Ascending aorta (tissue), 2 donors: ENCODE measurements at regions of chr12 and their contacts with region 1.

Region 1: DNA sequence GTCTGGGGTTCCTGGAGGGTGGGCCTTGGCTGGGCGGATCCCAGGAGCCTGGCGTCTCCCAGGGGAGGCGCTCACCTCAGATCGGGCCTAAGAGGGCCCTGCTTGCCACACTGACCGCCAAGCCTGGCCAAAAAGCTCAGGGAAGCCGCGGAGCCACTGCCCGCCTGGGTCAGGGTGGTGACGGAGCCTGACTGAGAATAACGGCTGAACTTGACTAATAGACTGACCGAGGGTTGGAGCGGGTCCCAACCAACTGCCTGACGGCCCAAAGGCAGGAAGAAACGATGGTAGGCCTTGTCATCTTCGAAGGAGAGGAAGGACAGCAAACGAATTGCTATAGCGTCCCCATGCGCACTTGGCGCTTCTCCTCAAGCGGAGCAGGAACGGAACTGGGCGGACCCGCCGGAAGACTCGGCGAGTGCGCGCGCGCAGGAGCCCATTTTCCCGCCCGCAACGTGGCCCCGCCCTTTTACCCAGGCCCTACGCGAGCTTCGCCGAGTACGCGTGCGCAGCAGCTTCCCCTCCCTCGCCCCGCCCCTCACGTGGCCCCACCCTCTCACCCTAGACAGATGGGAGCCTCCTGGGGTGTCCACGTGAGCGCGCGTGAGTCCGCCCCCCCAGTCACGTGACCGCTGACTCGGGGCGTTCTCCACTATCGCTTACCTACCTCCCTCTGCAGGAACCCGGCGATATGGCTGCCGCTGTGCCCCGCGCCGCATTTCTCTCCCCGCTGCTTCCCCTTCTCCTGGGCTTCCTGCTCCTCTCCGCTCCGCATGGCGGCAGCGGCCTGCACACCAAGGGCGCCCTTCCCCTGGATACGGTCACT is at the starts of genes ERP29 and TMEM116:
- DNase-seq: peak; percentile 97 to 100
- H3K4me3 ChIP-seq: peak within 1 kb of the TSS; percentile 85
- H3K27ac ChIP-seq: peak within 1 kb of the TSS; percentile 97 to 99
- H3K4me1 ChIP-seq: peaks cover 3 to 20% of the 10 kb centered on the region in 2 donors
- H3K27me3 ChIP-seq: no peaks in the 10 kb centered on the region
- CTCF ChIP-seq: peak; percentile 77 to 85 (median 82)
- total RNA-seq, gene ERP29: 21.6 TPM
- total RNA-seq, gene TMEM116: 2.2 TPM

Region 2: DNA sequence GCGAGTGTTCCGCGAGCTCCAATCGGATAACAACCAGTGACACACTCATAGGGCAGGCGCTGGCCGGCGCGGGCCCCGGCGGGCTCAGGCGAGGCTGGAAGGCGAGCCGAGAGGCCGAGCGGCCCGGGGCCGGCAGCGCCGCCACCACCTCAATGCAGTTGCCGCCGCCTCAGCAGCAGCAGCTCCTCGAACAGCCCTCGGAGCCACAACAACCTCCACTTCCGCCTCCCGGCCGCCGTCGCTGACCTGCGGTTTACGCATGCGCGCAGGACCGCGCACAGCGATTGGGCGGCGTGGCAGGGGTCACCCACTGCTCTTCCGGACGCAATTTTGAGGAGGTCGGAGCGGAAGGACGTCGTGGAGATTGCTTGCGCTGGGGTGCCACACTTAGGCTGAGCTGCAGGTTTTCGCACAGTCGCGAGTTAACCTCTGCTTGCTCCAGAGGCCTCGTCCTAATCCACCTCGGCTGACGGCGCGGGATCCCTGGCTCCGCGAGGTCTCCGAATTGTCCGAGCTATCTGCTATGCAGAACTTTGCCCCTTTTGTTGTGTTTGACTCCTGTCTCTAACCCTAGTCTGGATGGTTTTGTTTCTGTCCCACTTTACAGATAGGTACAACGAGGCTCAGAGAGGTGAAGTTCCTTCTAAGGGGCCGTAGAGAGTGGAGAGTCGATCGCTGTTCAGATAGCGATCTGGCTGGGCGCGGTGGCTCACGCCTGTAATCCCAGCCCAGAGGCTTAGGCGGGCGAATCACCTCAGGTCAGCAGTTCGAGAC is 327.1 kb before region 1 on chr12 and contains the starts of genes ACAD10 and BRAP:
- intact Hi-C with region 1: loop called (anchors 5 kb)
- DNase-seq: peak; percentile 71 to 96
- H3K4me3 ChIP-seq: peak within 1 kb of the TSS; percentile 78 to 88
- H3K27ac ChIP-seq: peak within 1 kb of the TSS; percentile 82 to 88
- H3K4me1 ChIP-seq: peaks cover 10 to 18% of the 10 kb centered on the region in 2 donors
- H3K27me3 ChIP-seq: no peaks in the 10 kb centered on the region
- CTCF ChIP-seq: no peak
- total RNA-seq, gene ACAD10: 32.0 TPM
- total RNA-seq, gene BRAP: 6.2 TPM

Region 3: DNA sequence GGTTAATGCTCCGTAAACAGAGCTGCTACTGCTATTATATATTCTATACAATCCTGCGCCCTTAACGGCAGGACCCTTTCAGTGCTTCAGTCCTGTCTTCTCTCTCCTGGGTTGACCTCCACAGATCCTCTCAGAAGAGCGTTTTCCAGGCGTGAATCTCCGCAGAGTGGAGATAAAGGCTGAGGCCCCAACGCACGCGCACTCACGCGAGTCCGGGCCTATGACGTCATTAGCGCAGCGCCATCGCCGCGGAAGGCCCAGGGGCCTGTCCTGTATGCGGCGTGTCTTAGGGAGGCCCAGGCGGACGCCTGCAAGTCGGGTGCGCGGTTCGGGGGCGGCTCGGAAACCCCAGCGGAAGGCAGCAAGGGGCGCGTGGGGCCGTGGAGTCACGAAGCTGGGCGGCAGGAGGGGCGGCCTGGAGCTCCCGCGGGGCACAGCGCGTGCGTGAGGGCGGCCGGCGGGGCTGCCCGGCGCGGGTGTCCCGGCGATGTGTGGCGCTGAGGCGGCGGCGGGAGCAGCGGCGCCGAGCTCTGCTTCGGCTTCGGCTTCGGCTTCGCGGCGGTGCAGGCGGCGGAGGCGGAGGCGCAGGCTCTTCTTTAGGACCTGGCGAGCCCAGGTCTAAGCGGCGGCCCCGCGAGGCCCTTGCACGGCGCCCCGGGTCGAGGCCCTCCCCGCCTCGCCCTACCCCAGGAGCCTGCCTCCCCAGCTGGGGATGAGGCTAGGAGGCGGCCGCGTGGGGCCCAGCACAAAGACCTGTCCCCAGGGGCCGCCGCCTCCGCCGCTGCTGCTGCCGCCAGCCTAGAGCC is 171.0 kb before region 1 on chr12 and contains the start of gene MAPKAPK5:
- intact Hi-C with region 1: loop called (anchors 2 kb)
- DNase-seq: peak; percentile 74 to 97
- H3K4me3 ChIP-seq: peak within 1 kb of the TSS; percentile 92 to 96
- H3K27ac ChIP-seq: peak within 1 kb of the TSS; percentile 88 to 94
- H3K4me1 ChIP-seq: peaks cover 8 to 23% of the 10 kb centered on the region in 2 donors
- H3K27me3 ChIP-seq: no peaks in the 10 kb centered on the region
- CTCF ChIP-seq: no peak
- total RNA-seq, gene MAPKAPK5: 6.4 TPM

Region 4: DNA sequence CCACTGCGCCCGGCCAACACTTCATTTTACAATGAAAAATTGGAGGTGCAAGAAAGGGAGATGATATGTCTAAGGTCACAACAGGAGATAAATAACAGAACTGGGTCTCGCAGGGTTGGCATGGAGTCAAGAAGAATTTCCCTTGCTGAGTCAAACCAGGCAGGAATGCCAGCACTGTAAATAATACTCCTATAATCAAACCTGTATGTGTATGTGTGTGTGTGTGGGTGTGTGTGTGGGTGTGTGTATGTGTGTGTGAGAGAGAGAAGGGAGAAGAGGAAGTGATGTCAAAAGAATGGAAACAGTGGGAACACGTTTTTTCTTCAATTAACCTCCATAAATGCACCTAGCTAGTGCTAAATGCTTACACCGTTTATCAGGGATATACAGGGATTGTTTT is 70.4 kb before region 1 on chr12:
- intact Hi-C with region 1: loop called (anchors 1 kb)
- DNase-seq: no peak
- H3K4me3 ChIP-seq: no peak overlapping the region
- H3K27ac ChIP-seq: no peak overlapping the region
- H3K4me1 ChIP-seq: peaks cover 0 to 7% of the 10 kb centered on the region in 2 donors
- H3K27me3 ChIP-seq: no peaks in the 10 kb centered on the region
- CTCF ChIP-seq: no peak

Region 5: GRCh38 chr12:112001576-112001975 is 11.4 kb before region 1 on chr12:
- intact Hi-C with region 1: no loop called
- DNase-seq: no peak
- H3K4me3 ChIP-seq: no peak overlapping the region
- H3K27ac ChIP-seq: peak overlapping the region; percentile 23 to 70
- H3K4me1 ChIP-seq: peaks cover 0 to 26% of the 10 kb centered on the region in 2 donors
- H3K27me3 ChIP-seq: no peaks in the 10 kb centered on the region
- CTCF ChIP-seq: no peak

Region 6: GRCh38 chr12:112108201-112109079 is 95.5 kb after region 1 on chr12 and contains the start of gene NAA25:
- intact Hi-C with region 1: loop called (anchors 5 kb)
- DNase-seq: peak; percentile 59 to 94
- H3K4me3 ChIP-seq: peak within 1 kb of the TSS; percentile 83 to 91
- H3K27ac ChIP-seq: peak within 1 kb of the TSS; percentile 97 to 98
- H3K4me1 ChIP-seq: peaks cover 0 to 16% of the 10 kb centered on the region in 2 donors
- H3K27me3 ChIP-seq: no peaks in the 10 kb centered on the region
- CTCF ChIP-seq: no peak
- total RNA-seq, gene NAA25: 1.9 TPM

Region 7: DNA sequence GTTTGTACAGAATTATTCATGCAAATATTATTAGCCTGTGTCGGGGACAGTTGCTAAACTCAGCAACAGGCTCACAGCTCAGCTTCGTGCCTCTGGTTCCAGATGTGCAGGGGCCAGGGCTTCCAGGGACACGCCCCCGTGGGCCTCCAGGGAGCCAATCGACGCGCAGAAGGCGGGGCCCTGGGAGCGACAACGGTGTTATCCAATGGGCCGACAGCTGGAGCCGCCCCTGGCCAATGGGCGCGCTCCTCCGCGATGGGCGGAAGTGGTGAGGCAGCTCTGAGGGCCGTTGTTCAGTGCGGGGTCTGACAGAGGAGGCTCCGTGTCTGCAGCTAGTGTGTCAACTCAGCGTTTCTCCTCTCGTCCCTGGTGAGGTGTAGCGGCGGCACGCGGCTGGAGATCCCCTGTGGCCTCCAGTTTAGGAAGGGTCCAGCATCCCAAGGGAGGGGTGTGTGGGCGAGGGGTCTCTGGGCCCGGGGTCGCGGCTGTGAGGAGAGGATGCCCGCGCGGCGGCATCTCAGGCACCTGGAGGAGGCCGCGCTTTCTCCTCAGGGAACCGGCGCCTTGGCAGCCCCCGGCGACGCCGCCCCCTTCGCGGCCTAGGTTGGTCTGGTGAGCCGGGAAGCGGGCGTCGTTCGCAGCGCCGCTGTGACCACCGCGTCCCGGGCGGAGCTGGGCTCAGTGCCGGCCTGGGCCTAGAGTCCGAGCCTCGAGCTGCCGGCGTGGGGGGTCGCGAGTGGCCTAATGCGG is 112.4 kb after region 1 on chr12 and contains the start of gene TRAFD1:
- intact Hi-C with region 1: loop called (anchors 5 kb)
- DNase-seq: peak; percentile 92 to 98
- H3K4me3 ChIP-seq: peak within 1 kb of the TSS; percentile 87 to 94
- H3K27ac ChIP-seq: peak within 1 kb of the TSS; percentile 95 to 97
- H3K4me1 ChIP-seq: peaks cover 17 to 34% of the 10 kb centered on the region in 2 donors
- H3K27me3 ChIP-seq: no peaks in the 10 kb centered on the region
- CTCF ChIP-seq: no peak
- total RNA-seq, gene TRAFD1: 9.3 TPM